ENCODE measurements at regions of chr17 and their contacts with region 1.

Region 1: GRCh38 chr17:19306160-19307111 is 56.1 kb downstream of the B9D1 start:
- DNase-seq: peak in 1 of 2 donors; percentile 51
- ATAC-seq: no peak
- H3K4me3 ChIP-seq: no peak overlapping the region
- H3K27ac ChIP-seq: no peak overlapping the region
- H3K4me1 ChIP-seq: no peaks in the 10 kb centered on the region
- H3K27me3 ChIP-seq: no peaks in the 10 kb centered on the region

Region 2: GRCh38 chr17:19254651-19255050 is 51.8 kb before region 1 on chr17:
- intact Hi-C with region 1: loop called in 1 of 2 experiments (anchors 5 kb)
- DNase-seq: no peak
- ATAC-seq: no peak
- H3K4me3 ChIP-seq: no peak overlapping the region
- H3K27ac ChIP-seq: no peak overlapping the region
- H3K4me1 ChIP-seq: peaks cover 2% of the 10 kb centered on the region in 2 donors
- H3K27me3 ChIP-seq: peaks cover 0 to 2% of the 10 kb centered on the region in 2 donors

Measured in aorta (tissue), 5 donors.